ENCODE measurements at regions of chr12 and their contacts with region 1.

Region 1: DNA sequence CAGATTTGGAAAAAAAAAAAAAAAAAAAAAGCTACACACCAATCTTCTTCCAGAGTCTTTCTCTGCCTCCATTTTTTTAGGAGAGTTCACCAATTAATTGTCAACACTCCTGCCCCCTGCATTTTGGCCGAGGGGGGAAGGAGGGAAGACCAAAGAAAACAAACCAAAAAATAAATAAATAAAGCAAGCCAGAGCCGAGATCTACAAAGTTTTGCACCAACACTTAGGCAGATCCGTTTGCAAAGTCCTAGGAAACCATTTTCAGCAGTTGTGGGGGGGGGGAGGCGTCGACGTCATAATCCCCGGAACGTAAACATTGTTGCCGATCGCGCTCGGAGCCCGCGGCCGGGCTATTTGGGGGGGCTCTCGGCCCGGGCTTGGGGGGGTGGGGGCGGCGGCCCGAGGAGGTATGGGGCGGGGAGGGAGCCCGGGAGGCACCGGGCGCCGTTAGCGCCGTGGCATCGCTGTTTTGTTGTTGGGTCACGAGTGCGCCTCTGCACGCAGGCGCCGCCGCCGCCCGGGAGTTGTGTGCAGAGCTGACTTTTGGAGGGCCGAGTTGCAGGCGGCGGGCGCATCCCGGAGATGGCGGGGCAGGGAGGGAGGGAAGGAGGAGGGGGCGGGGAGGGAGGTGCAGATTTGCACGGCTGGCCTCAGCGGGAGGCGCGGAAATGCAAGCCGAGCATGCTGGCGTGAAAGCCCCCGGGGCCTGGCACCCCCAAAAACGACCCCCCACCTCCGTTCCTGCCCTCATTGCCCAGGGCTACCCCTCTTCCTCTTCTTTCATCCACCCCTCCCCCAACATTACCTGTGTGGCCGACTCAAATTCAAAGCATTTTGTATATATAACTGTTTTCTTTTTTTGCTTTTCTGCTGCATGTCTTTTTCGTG is 598 bp downstream of the KDM2B start:
- DNase-seq: peak; percentile 84
- H3K4me3 ChIP-seq: peak overlapping the region; percentile 64 to 87
- H3K27ac ChIP-seq: peak overlapping the region; percentile 90 to 98
- H3K4me1 ChIP-seq: peaks cover 25 to 32% of the 10 kb centered on the region in 2 experiments; a peak in 3 of 4 replicates
- H3K27me3 ChIP-seq: no peaks in the 10 kb centered on the region
- CTCF ChIP-seq: no peak
- EP300 ChIP-seq: no peak
- RAD21 ChIP-seq: no peak

Region 2: DNA sequence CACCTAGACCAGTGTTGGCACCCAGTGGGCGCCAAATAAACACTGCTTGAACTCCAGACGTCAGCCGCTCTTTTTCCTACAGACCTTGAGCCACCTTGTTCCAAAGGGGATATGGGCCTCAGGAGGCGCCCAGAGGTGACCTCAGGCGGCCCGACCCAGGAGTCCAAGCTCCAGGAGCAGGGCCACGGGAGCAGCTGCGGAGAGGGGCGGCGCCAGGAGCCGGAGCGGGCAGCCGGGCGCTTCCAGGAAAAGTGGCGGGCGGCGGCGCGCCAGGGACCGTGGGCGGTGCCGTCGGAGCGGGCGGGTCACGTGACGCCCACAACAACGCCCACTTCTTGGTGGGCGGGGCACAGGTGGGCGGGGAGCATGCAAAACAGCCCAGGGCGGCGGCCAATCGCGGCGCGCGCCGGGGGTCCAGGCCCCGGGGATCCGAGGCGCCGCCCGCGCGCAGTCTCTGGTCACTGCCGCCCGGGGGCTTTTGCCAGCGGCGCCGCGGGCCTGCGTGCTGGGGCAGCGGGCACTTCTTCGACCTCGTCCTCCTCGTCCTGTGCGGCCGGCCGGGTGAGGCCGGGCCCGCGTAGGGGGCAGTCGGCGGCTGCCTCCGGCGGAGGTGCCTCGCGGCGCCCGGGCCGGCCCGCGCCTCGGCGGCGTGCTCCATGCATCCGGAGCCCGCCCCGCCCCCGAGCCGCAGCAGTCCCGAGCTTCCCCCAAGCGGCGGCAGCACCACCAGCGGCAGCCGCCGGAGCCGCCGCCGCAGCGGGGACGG is 46.0 kb after region 1 on chr12 and contains the start of gene ORAI1:
- CTCF ChIA-PET with region 1: interaction called, 12 read pairs
- POLR2A ChIA-PET with region 1: interaction called, 4 read pairs
- DNase-seq: peak; percentile 99
- H3K4me3 ChIP-seq: peak within 1 kb of the TSS; percentile 63 to 82
- H3K27ac ChIP-seq: peak within 1 kb of the TSS; percentile 77 to 84
- H3K4me1 ChIP-seq: peaks cover 16 to 23% of the 10 kb centered on the region in 2 experiments; a peak in 3 of 4 replicates
- H3K27me3 ChIP-seq: no peaks in the 10 kb centered on the region
- CTCF ChIP-seq: no peak; the same call in 1 of the 2 replicates
- EP300 ChIP-seq: no peak
- RAD21 ChIP-seq: no peak
- polyA plus RNA-seq, gene ORAI1: 13.2 and 16.6 TPM in 2 replicates

Region 3: GRCh38 chr12:122081697-122082221 is 501.5 kb after region 1 on chr12:
- CTCF ChIA-PET with region 1: no interaction called
- POLR2A ChIA-PET with region 1: no interaction called
- DNase-seq: no peak
- H3K4me3 ChIP-seq: peak overlapping the region; percentile 13 to 74; a peak in 2 of 4 replicates
- H3K27ac ChIP-seq: peak overlapping the region; percentile 17 to 84; a peak in 3 of 4 replicates
- H3K4me1 ChIP-seq: peaks cover 15 to 36% of the 10 kb centered on the region in 2 experiments
- H3K27me3 ChIP-seq: no peaks in the 10 kb centered on the region
- CTCF ChIP-seq: no peak
- EP300 ChIP-seq: no peak
- RAD21 ChIP-seq: no peak